Thyroid gland (tissue), 4 donors: ENCODE measurements at regions of chr12 and their contacts with region 1.

Region 1: GRCh38 chr12:113048716-113049127 is 7.8 kb upstream of the DTX1 start:
- DNase-seq: peak; percentile 56 to 64
- H3K4me3 ChIP-seq: no peak overlapping the region
- H3K27ac ChIP-seq: no peak overlapping the region
- H3K4me1 ChIP-seq: no peaks in the 10 kb centered on the region
- H3K27me3 ChIP-seq: no peaks in the 10 kb centered on the region
- CTCF ChIP-seq: peak; percentile 62 to 87 (median 82)
- POLR2A ChIP-seq: no peak

Region 2: DNA sequence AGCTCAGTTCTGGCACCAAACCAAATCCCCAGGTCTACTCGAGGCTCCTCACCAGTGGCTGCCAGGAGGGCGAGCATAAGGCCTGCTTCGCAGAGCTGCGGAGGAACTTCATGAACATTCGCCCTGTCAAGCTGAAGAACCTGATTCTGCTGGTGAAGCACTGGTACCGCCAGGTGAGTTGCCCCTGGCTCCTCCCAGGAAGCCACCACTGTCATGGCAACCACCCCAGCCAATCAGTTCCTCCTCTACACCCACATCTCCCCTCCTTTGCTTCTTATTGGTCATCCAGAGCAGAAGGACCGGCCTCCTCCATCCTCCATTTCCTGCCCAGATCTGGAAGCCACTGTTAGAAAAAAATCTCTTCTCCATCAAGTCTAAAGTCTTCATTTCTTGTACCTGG is 87.6 kb before region 1 on chr12:
- intact Hi-C with region 1: no loop called
- DNase-seq: no peak
- H3K4me3 ChIP-seq: no peak overlapping the region
- H3K27ac ChIP-seq: no peak overlapping the region
- H3K4me1 ChIP-seq: no peaks in the 10 kb centered on the region
- H3K27me3 ChIP-seq: no peaks in the 10 kb centered on the region
- CTCF ChIP-seq: no peak
- POLR2A ChIP-seq: no peak

Region 3: DNA sequence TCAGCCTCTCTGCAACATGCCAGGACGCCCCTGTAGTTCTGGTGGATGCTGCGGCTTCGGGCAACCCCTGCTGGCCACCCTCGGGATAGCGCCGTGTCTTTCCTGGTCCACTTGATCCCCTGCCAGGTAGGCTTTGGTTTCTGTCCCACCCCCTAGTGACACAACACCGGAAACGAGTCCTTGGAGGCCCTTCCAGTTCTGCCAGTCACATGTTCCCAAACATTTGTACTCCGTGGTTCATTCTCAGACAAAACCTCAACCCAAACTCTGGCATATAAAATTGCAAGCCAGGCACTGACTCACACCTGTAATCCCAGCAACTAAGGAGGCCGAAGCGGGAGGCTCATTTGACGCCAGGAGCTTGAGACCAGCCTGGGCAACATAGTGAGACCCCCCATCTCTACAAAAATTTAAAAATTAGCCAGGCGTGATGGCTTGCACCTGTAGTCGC is 49.7 kb after region 1 on chr12:
- intact Hi-C with region 1: loop called (anchors 5 kb)
- DNase-seq: peak; percentile 92 to 94
- H3K4me3 ChIP-seq: no peak overlapping the region
- H3K27ac ChIP-seq: peak overlapping the region; percentile 40 to 70 (median 66)
- H3K4me1 ChIP-seq: peaks cover 16 to 23% of the 10 kb centered on the region in 2 donors
- H3K27me3 ChIP-seq: no peaks in the 10 kb centered on the region
- CTCF ChIP-seq: peak; percentile 61 to 98 (median 92)
- POLR2A ChIP-seq: no peak

Region 4: GRCh38 chr12:113152835-113153814 is 104.4 kb after region 1 on chr12:
- intact Hi-C with region 1: loop called (anchors 5 kb)
- DNase-seq: peak; percentile 80 to 84
- H3K4me3 ChIP-seq: peak overlapping the region in 1 of 3 donors; percentile 26
- H3K27ac ChIP-seq: no peak overlapping the region
- H3K4me1 ChIP-seq: peaks cover 17 to 26% of the 10 kb centered on the region in 2 donors
- H3K27me3 ChIP-seq: no peaks in the 10 kb centered on the region
- CTCF ChIP-seq: peak in 4 of 6 experiments; percentile 45 to 70 (median 52)
- POLR2A ChIP-seq: no peak

Region 5: DNA sequence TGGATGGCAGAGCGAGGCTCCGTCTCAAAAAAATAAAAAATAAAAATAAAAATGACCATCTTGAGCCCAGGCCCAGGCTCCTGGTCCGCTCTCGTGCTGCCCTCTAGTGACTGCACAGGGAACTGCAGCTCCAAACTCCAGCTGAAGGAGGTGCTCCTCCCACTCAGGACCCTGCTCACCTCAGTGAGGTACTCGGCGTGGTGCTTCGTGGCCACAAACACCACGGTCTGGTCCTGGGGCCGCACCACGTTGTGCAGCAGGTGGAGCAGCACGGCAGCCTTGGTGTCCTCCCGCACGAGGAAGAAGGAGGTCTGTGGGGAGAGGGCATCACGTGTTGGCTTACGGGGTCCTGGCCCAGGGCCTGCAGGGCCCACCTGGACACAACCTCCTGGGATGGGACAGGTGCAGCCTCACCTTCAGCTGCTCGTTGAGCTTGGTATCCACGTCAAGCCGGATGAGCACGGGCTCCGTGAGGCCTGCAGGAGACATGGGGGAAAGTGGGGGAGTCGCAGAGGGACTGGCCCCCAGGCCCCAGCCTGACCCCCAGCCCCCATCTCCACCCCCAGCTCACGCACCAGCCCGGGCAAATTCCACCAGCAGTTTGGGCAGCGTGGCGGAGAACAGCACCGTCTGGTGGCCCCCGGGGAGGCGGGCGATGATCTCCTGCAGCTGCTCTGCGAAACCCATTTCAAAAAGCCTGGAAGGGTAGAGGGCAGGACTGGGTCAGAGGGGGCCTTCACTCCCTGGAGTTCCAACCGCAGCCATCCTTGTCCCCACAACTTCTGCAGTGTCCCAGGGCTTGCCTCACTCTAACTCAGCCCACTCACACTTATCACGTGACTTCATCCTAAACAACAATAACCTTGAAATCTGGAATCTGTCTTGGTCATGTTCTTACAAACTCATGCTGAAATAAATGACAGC is 126.0 kb after region 1 on chr12:
- intact Hi-C with region 1: loop called (anchors 2 kb)
- DNase-seq: peak; percentile 80
- H3K4me3 ChIP-seq: no peak overlapping the region
- H3K27ac ChIP-seq: no peak overlapping the region
- H3K4me1 ChIP-seq: peaks cover 3 to 17% of the 10 kb centered on the region in 2 donors
- H3K27me3 ChIP-seq: no peaks in the 10 kb centered on the region
- CTCF ChIP-seq: peak; percentile 93 to 100 (median 98)
- POLR2A ChIP-seq: no peak